CD4-positive, alpha-beta memory T cell (primary cell): ENCODE measurements at regions of chr6 and their contacts with region 1.

Region 1: DNA sequence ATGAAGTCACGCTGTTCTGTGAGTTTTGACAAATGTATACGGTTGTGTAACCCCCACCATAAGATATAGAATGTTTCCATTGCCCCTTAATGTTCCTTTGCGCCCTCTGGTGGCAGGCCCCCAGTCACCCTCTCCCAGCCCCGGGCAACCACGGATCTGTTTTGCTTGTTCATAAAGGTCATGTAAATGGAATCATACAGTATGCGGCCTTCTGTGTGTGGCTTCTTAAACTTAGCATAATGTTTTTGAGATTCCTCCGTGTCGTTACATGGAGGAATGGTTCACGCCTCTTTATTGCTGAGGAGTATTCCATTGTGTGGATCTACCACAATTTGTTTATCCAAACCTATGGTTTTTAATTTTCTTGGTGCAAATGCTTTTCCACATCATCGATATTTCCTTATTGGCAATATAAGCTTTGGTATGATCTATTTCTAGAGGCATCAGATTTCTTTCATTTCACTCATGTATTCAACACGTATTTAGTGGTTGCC is 28.4 kb downstream of the LYRM2 start:
- DNase-seq: peak; percentile 62 to 69 (median 65)
- H3K4me3 ChIP-seq: no peak overlapping the region
- H3K4me3 Mint-ChIP-seq: no peak overlapping the region
- H3K27ac ChIP-seq: no peak overlapping the region
- H3K27ac Mint-ChIP-seq: peak overlapping the region in 2 of 7 donors; percentile 14 to 25
- H3K4me1 ChIP-seq: no peaks in the 10 kb centered on the region
- H3K4me1 Mint-ChIP-seq: peaks cover 0 to 3% (median 0%) of the 10 kb centered on the region in 4 donors
- H3K27me3 ChIP-seq: no peaks in the 10 kb centered on the region
- H3K27me3 Mint-ChIP-seq: no peaks in the 10 kb centered on the region

Region 2: GRCh38 chr6:88547768-88548167 is 1062.4 kb before region 1 on chr6:
- CTCF ChIA-PET with region 1: no interaction called
- POLR2A ChIA-PET with region 1: no interaction called
- intact Hi-C with region 1: no loop called
- DNase-seq: no peak
- H3K4me3 ChIP-seq: no peak overlapping the region
- H3K4me3 Mint-ChIP-seq: no peak overlapping the region
- H3K27ac ChIP-seq: no peak overlapping the region
- H3K27ac Mint-ChIP-seq: no peak overlapping the region
- H3K4me1 ChIP-seq: no peaks in the 10 kb centered on the region
- H3K4me1 Mint-ChIP-seq: no peaks in the 10 kb centered on the region
- H3K27me3 ChIP-seq: no peaks in the 10 kb centered on the region
- H3K27me3 Mint-ChIP-seq: peaks cover 3 to 12% of the 10 kb centered on the region in 2 donors

Region 3: GRCh38 chr6:88855541-88856147 is 754.6 kb before region 1 on chr6:
- CTCF ChIA-PET with region 1: no interaction called
- POLR2A ChIA-PET with region 1: no interaction called
- intact Hi-C with region 1: no loop called
- DNase-seq: no peak
- H3K4me3 ChIP-seq: no peak overlapping the region
- H3K4me3 Mint-ChIP-seq: no peak overlapping the region
- H3K27ac ChIP-seq: no peak overlapping the region
- H3K27ac Mint-ChIP-seq: peak overlapping the region in 1 of 7 donors; percentile 88
- H3K4me1 ChIP-seq: no peaks in the 10 kb centered on the region
- H3K4me1 Mint-ChIP-seq: peaks cover 0 to 4% (median 3%) of the 10 kb centered on the region in 4 donors
- H3K27me3 ChIP-seq: no peaks in the 10 kb centered on the region
- H3K27me3 Mint-ChIP-seq: no peaks in the 10 kb centered on the region

Region 4: DNA sequence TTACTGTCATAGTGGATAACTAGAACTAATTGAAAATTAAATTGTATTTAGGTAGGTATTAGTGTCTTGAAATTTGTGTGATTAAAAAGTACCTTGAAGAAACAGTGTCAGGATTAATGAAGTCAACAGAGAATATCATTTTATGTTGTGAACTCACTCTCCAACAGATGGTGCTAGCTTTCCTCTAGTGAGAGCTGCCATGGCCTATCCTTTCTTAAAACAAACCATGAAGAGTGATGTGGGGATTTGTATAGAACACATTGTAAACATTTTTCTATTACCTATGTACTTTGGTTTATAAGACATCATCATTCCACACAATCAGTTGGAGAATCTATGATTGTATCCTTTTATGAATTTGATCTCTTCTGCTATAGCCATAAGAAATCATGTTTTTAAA is 487.6 kb before region 1 on chr6:
- CTCF ChIA-PET with region 1: no interaction called
- POLR2A ChIA-PET with region 1: no interaction called
- intact Hi-C with region 1: loop called (anchors 2 kb)
- DNase-seq: peak in 3 of 5 donors; percentile 15 to 26 (median 19)
- H3K4me3 ChIP-seq: no peak overlapping the region
- H3K4me3 Mint-ChIP-seq: no peak overlapping the region
- H3K27ac ChIP-seq: no peak overlapping the region
- H3K27ac Mint-ChIP-seq: no peak overlapping the region
- H3K4me1 ChIP-seq: no peaks in the 10 kb centered on the region
- H3K4me1 Mint-ChIP-seq: peaks cover 1 to 8% (median 5%) of the 10 kb centered on the region in 4 donors
- H3K27me3 ChIP-seq: no peaks in the 10 kb centered on the region
- H3K27me3 Mint-ChIP-seq: no peaks in the 10 kb centered on the region

Region 5: DNA sequence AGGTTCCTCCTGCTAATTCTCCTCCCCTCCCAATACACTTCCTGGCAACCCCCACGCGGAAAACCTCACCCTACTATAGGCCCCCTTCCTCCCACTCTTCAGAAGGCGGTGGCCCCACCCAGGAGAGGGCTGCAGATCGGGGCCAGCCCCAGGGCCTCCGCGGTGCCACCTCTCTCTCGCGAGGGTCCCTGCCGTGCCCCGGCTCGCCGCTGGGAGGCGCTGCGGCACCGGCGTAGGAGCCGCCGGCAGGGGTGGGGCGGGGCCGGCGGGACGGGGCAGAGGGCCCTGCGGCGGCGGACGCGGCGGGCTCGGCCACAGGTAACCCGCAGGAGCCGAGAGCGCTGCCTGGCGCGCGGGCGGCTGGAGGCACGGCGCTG is 177.3 kb before region 1 on chr6 and contains the start of gene ANKRD6:
- CTCF ChIA-PET with region 1: interaction called, 83 read pairs
- POLR2A ChIA-PET with region 1: interaction called, 3 read pairs
- intact Hi-C with region 1: loop called (anchors 1 kb)
- DNase-seq: peak; percentile 68 to 86 (median 80)
- H3K4me3 ChIP-seq: peak within 1 kb of the TSS; percentile 39 to 44
- H3K4me3 Mint-ChIP-seq: peak within 1 kb of the TSS; percentile 88 to 93 (median 90)
- H3K27ac ChIP-seq: peak within 1 kb of the TSS; percentile 37
- H3K27ac Mint-ChIP-seq: peak within 1 kb of the TSS; percentile 47 to 90 (median 86)
- H3K4me1 ChIP-seq: peaks cover 10% of the 10 kb centered on the region
- H3K4me1 Mint-ChIP-seq: peaks cover 16 to 34% (median 24%) of the 10 kb centered on the region in 4 donors
- H3K27me3 ChIP-seq: no peaks in the 10 kb centered on the region
- H3K27me3 Mint-ChIP-seq: peaks cover 3 to 4% of the 10 kb centered on the region in 2 donors
- total RNA-seq, gene ANKRD6: 4.4 to 5.8 TPM

Region 6: DNA sequence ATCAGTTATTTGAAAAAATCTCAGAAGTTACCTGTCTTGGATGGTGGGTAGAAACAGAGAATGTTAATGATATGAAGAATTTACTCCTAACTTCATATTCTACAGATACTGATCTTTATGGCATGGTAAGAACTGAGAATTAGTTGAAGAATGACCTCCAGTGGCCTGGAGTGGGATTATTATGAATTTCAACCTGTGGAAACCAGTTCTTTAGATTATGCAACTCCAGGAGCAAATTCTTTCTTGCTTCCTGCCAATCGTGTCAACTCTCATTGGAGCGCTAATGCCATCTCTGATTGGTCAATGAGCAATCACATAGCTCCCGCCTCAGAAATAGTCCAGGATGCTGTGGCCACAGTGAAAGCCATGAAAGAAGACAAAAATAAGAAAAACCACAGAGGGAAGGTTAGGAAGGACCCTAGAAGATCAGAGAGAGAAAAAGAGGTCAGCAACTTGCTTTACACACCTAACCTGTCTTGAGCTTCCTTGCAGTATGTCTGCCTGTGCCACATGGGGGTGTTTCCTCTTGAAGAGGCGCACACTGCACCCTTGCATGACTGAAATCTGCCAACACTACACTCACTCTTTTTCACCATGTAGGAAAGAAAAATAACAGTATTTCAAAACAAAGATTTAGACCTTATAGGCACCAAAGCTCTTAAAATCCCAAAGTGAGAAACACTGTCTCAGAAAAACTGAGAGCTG is 12.1 kb before region 1 on chr6:
- CTCF ChIA-PET with region 1: interaction called, 14 read pairs
- POLR2A ChIA-PET with region 1: no interaction called
- intact Hi-C with region 1: no loop called
- DNase-seq: no peak
- H3K4me3 ChIP-seq: no peak overlapping the region
- H3K4me3 Mint-ChIP-seq: no peak overlapping the region
- H3K27ac ChIP-seq: no peak overlapping the region
- H3K27ac Mint-ChIP-seq: peak overlapping the region in 1 of 7 donors; percentile 28
- H3K4me1 ChIP-seq: peaks cover 11% of the 10 kb centered on the region
- H3K4me1 Mint-ChIP-seq: peaks cover 11 to 19% (median 15%) of the 10 kb centered on the region in 4 donors
- H3K27me3 ChIP-seq: no peaks in the 10 kb centered on the region
- H3K27me3 Mint-ChIP-seq: no peaks in the 10 kb centered on the region